ENCODE measurements at regions of chr5 and their contacts with region 1.

Region 1: DNA sequence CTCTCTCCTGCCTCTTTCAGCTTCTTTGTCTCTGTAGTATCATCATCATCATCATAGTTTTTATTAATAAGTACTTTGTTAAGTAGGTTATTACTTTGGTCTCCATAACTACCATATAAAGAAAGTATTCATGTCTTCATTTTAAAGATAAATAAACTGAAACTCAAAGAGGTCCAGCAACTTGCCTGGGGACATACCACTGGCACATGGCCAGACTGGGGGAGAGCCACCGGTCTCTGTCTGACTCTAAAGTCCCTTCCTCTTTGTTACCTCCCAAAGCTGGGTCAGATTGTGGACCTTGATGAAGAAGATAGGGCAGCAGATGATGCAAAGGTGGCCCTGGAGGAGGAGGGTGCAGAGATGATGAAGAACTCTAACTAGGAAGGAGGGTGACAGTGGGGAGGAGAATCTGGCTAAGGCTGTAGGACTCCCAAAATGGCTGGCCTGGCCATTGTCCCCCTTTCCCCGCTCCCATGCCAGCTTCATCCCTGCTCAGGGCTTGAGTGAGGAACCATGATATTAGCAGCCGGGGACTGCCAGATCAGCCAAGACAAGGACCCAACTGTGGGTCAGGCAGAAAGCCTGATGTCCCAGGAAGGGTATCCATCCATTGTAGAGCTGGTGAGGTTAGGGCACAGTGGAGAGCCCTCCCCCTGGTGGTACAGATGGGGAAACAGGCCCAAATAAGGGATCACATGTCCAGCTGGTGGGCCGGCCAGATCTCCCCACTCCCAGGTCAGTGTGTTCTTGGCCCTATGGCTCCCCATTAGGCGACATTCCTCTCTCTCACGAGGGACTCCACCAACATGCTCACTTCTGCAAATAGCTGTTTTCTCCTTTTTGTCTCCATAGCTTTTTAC is 8.7 kb downstream of the CDX1 start:
- DNase-seq: peak; percentile 70
- ATAC-seq: peak; percentile 97
- H3K4me3 Mint-ChIP-seq: no peak overlapping the region
- H3K27ac Mint-ChIP-seq: no peak overlapping the region
- H3K4me1 Mint-ChIP-seq: no peaks in the 10 kb centered on the region
- H3K27me3 Mint-ChIP-seq: peaks cover 39% of the 10 kb centered on the region
- CTCF ChIP-seq: peak; percentile 64

Region 2: GRCh38 chr5:149938791-149939358 is 236.4 kb before region 1 on chr5:
- CTCF ChIA-PET with region 1: no interaction called
- POLR2A ChIA-PET with region 1: no interaction called
- DNase-seq: no peak
- ATAC-seq: no peak
- H3K4me3 Mint-ChIP-seq: no peak overlapping the region
- H3K27ac Mint-ChIP-seq: no peak overlapping the region
- H3K4me1 Mint-ChIP-seq: peaks cover 6% of the 10 kb centered on the region; the same call in 1 of the 2 replicates
- H3K27me3 Mint-ChIP-seq: no peaks in the 10 kb centered on the region
- CTCF ChIP-seq: no peak

Region 3: DNA sequence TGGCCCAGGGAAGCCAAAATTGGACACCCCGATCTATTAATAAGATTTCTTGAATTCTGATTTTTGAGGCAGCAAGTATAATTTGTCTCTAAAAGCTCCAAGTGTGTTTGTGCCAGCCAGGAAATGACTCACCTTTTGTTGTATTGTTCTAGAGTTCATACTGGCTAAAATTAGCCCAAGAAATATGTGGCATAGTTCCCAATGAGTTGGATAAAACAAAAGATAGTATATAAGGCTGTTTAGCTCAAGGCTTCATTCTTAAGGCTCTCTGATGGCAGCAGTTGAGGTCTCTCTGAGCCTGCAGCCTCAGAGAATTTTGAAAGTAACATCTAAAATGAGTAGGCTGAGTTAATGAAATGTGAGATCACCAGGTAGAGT is 153.2 kb before region 1 on chr5:
- CTCF ChIA-PET with region 1: no interaction called
- POLR2A ChIA-PET with region 1: no interaction called
- DNase-seq: no peak
- ATAC-seq: no peak
- H3K4me3 Mint-ChIP-seq: peak overlapping the region; percentile 24
- H3K27ac Mint-ChIP-seq: peak overlapping the region; percentile 92
- H3K4me1 Mint-ChIP-seq: peaks cover 27% of the 10 kb centered on the region
- H3K27me3 Mint-ChIP-seq: no peaks in the 10 kb centered on the region
- CTCF ChIP-seq: no peak

Region 4: GRCh38 chr5:150097152-150097551 is 78.2 kb before region 1 on chr5:
- CTCF ChIA-PET with region 1: no interaction called
- POLR2A ChIA-PET with region 1: no interaction called
- DNase-seq: no peak
- ATAC-seq: no peak
- H3K4me3 Mint-ChIP-seq: no peak overlapping the region
- H3K27ac Mint-ChIP-seq: no peak overlapping the region
- H3K4me1 Mint-ChIP-seq: no peaks in the 10 kb centered on the region
- H3K27me3 Mint-ChIP-seq: peaks cover 2% of the 10 kb centered on the region; the same call in 1 of the 2 replicates
- CTCF ChIP-seq: no peak

Region 5: GRCh38 chr5:150138551-150139265 is 36.6 kb before region 1 on chr5:
- CTCF ChIA-PET with region 1: interaction called, 11 read pairs
- POLR2A ChIA-PET with region 1: interaction called, 3 read pairs
- DNase-seq: peak; percentile 55
- ATAC-seq: peak; percentile 33
- H3K4me3 Mint-ChIP-seq: peak overlapping the region; percentile 1; the same call in 1 of the 2 replicates
- H3K27ac Mint-ChIP-seq: peak overlapping the region; percentile 67
- H3K4me1 Mint-ChIP-seq: peaks cover 57% of the 10 kb centered on the region
- H3K27me3 Mint-ChIP-seq: peaks cover 8% of the 10 kb centered on the region
- CTCF ChIP-seq: no peak

Region 6: DNA sequence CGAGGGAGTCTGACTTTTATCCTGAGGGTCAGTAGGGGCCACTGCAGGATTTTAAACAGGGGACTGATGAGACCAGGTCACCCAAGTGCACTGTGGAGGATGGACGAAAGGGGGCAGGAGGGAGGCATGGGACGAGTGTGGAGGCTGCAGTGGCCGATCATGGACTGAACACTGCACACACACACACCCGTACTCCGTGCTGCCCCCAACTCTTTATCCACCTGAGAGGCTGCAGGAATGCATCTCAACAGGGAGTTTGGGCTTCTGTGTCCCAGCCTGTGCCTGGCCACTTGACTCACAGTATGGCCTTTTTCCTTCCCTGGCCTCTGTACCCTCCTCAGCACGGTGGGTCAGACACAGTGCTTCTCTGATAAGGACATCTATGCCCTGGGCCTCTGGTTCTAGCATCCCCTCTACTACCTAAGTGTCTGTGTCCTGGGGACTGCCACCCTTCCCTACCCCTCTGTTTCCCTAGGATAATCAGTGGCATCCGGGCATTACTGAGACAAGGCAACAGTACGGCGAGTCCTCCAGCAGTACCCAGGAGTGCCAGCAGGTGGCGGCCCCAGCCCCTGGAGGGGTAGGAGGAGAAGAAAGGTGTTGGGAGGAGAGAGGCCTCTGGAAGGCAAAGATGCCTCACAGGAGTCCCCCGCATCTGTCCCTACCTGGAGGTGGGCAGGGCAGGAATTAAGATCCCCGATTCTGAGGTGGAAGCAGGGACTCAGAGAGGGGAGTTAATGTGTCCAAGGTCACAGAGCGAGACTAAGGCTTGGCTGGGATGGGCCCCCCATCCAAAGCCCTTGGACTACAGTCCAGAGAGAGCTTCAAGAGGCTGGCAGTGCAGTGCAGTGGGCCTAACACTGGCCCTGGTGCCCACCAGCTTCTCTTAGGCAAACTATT is 13.8 kb before region 1 on chr5:
- CTCF ChIA-PET with region 1: interaction called, 23 read pairs
- POLR2A ChIA-PET with region 1: no interaction called
- DNase-seq: peak; percentile 97
- ATAC-seq: peak; percentile 85
- H3K4me3 Mint-ChIP-seq: peak overlapping the region; percentile 43
- H3K27ac Mint-ChIP-seq: no peak overlapping the region
- H3K4me1 Mint-ChIP-seq: peaks cover 26% of the 10 kb centered on the region
- H3K27me3 Mint-ChIP-seq: peaks cover 56% of the 10 kb centered on the region
- CTCF ChIP-seq: peak; percentile 95

Region 7: DNA sequence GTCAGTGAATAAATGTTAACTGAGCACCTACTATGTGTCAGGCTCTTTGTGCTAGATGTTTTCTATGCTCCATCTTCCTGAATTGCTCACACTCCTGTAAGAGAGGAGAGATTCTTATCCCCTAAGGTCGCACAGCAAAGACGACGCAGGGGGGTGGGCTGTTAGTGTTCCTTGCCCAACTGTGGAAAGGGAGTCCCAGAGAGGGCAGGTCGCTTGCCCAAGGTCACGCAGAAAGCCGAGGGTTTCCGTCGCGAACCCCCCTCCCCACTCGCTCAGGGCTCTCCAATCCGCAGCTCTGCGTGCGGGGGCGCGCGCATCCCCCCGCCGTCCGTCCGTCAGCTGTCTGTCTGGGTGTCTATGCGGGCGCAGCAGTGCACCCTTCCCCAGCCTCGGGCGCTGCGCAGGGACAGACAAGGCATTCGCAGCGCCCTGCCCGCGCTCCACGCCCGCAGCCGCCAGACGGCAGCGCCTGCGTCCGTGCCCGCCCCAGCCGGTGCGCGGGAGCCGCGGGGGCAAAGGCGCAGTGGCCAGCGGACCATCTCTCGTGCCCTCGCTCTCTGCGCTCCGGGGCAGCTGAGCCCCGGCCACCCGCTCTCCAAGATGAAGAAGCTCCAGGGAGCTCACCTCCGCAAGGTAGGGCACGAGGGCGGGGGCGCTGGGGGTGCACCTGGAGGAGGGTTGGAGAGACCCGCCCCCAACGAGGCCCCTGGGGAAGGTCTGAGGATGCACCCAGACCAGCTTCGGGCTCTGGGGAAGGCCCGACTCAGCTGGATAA is 14.6 kb after region 1 on chr5 and contains the start of gene SLC6A7:
- CTCF ChIA-PET with region 1: interaction called, 19 read pairs
- POLR2A ChIA-PET with region 1: no interaction called
- DNase-seq: no peak
- ATAC-seq: peak; percentile 49
- H3K4me3 Mint-ChIP-seq: peak within 1 kb of the TSS; percentile 55
- H3K27ac Mint-ChIP-seq: no peak within 1 kb of the TSS
- H3K4me1 Mint-ChIP-seq: peaks cover 24% of the 10 kb centered on the region
- H3K27me3 Mint-ChIP-seq: peaks cover 81% of the 10 kb centered on the region
- CTCF ChIP-seq: no peak
- total RNA-seq, gene SLC6A7: 0.04 TPM in 1 of 3 replicates, not detected in the others

Region 8: DNA sequence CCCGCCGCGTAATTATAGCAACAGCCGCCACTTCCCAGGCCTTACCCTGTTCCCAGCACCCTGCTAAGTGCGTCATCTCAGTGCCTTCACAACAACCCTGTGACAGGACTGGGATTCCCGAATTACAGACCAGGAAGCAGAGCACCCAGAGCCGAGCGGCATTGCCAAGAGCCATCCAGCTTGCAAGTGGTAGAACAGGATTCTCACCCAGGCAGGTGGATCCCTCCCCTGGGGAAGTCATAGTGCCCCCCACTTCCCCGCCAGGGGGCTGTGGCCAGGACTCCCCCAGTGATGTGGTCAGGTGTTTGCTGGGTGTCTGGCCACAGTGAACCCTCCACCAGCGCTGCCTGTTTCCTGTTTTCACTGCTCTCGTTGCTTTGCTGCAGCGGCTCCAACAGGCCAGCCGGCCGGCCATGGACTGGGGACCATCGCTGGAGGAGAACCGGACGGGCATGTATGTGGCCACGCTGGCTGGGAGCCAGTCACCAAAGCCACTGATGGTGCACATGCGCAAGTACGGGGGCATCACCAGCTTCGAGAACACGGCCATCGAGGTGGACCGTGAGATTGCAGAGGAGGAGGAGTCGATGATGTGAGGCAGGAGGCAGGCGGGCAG is 33.8 kb after region 1 on chr5:
- CTCF ChIA-PET with region 1: interaction called, 22 read pairs
- POLR2A ChIA-PET with region 1: no interaction called
- DNase-seq: no peak
- ATAC-seq: no peak
- H3K4me3 Mint-ChIP-seq: no peak overlapping the region
- H3K27ac Mint-ChIP-seq: no peak overlapping the region
- H3K4me1 Mint-ChIP-seq: peaks cover 47% of the 10 kb centered on the region
- H3K27me3 Mint-ChIP-seq: no peaks in the 10 kb centered on the region; the same call in 1 of the 2 replicates
- CTCF ChIP-seq: no peak

Region 9: DNA sequence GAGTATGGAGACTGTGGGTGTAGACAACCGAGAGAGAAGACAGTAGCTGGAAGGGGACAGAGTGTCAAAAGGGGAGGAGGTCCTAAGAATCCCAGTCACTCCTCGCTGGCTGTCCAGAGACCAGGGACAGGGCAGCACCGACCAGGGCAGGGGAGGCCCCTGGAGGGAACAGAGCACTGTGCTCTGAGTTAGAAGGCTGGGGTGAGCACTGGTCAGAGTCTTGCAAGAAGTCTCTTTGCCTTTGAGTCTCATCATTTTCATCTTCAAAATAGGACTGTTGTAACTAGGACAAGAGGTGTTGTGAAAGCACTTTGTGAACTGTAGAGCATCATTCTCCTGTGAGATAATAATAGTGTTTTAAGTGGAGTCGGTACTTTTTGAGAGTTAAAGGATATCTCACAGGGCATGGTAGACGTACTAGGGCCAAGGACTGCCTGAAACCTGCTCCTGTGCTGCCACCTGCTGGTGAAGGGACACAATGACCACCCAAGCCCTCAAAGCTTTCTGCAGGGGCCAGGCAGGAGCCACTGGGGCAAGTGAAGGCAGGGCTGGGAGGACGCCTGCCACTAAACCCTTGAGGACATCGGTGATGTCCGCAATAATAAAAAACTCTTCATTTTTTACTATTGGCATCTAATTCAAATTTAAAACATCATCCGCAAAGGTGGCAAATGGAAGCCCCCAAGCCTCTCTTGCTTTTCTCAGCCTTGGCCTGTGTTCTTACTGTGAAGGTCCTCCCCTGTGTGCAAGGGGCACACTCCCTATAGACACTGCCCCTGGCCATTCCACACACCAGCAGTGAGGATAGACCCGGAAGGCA is 42.8 kb after region 1 on chr5:
- CTCF ChIA-PET with region 1: interaction called, 22 read pairs
- POLR2A ChIA-PET with region 1: no interaction called
- DNase-seq: peak; percentile 90
- ATAC-seq: peak; percentile 92
- H3K4me3 Mint-ChIP-seq: no peak overlapping the region
- H3K27ac Mint-ChIP-seq: no peak overlapping the region
- H3K4me1 Mint-ChIP-seq: 0 out of 2 replicates have a peak, but pooled peaks cover 2% of the 10 kb centered on the region
- H3K27me3 Mint-ChIP-seq: peaks cover 9% of the 10 kb centered on the region
- CTCF ChIP-seq: peak; percentile 87

Measured in WTC11 (cell line).